ENCODE measurements at regions of chr10 and their contacts with region 1.

Region 1: DNA sequence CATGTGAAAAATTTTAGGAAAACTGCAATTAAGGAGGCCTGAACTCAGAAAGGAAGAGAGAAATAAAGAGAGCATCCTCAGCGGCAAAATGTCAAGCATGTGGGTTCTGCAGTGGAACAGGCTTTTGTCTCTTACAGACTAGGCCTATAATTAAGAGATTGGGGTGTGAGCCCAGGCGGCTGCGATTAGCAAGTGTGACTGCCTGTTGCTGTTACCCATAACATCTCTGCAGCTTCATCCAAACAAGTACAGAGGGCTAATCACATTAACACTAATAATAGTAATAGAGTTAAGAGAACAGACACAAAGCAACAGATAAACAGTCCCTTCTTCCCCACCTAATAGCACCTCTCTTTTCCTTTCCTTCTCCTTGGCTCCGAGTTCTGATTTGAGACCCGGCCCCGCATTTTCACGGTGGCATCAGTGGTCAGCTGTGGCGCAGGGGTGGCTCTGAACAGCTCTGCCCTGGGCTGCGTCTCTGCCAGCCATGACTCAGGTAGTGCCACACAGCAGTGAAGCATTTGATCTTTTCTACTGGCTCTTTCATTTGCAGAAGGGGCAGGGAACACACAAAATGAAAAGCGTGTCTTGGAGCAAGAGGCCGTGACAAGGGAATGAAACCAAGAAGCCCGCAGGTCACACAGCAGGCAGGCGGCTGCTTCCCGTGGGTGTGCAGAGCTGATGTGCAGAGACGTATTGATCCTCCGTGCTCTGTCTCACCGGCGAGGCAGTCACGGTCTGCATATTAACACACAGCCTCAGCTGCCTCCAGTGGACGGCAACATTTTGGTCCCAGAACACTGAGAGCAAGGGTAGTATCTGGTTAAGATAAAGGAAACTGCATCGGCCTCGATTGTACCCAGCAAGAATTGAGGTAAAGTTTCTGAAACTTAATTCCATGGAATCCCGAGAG is 103.1 kb downstream of the KLF6 start:
- DNase-seq: no peak
- H3K4me3 Mint-ChIP-seq: no peak overlapping the region
- H3K27ac Mint-ChIP-seq: no peak overlapping the region
- H3K4me1 Mint-ChIP-seq: peaks cover 10% of the 10 kb centered on the region
- H3K27me3 Mint-ChIP-seq: no peaks in the 10 kb centered on the region

Region 2: GRCh38 chr10:3655528-3655927 is 26.4 kb before region 1 on chr10:
- CTCF ChIA-PET with region 1: no interaction called
- intact Hi-C with region 1: loop called (anchors 2 kb)
- DNase-seq: peak; percentile 12
- H3K4me3 Mint-ChIP-seq: no peak overlapping the region
- H3K27ac Mint-ChIP-seq: no peak overlapping the region
- H3K4me1 Mint-ChIP-seq: peaks cover 21% of the 10 kb centered on the region
- H3K27me3 Mint-ChIP-seq: peaks cover 5% of the 10 kb centered on the region